ENCODE measurements at regions of chr1 and their contacts with region 1.

Region 1: GRCh38 chr1:15788624-15789301 is 18.7 kb downstream of the UQCRHL start:
- DNase-seq: peak; percentile 76
- H3K4me3 ChIP-seq: no peak overlapping the region
- H3K27ac ChIP-seq: peak overlapping the region; percentile 50
- H3K4me1 ChIP-seq: peaks cover 26% of the 10 kb centered on the region
- H3K27me3 ChIP-seq: no peaks in the 10 kb centered on the region
- CTCF ChIP-seq: no peak

Region 2: GRCh38 chr1:15851210-15852035 is 62.7 kb after region 1 on chr1:
- CTCF ChIA-PET with region 1: no interaction called
- dilution Hi-C with region 1: no loop called
- in situ Hi-C with region 1: no loop called
- intact Hi-C with region 1: no loop called
- DNase-seq: no peak
- H3K4me3 ChIP-seq: no peak overlapping the region
- H3K27ac ChIP-seq: peak overlapping the region; percentile 21
- H3K4me1 ChIP-seq: peaks cover 31% of the 10 kb centered on the region
- H3K27me3 ChIP-seq: no peaks in the 10 kb centered on the region
- CTCF ChIP-seq: no peak

Region 3: GRCh38 chr1:15994590-15995351 is 206.0 kb after region 1 on chr1:
- CTCF ChIA-PET with region 1: no interaction called
- dilution Hi-C with region 1: no loop called
- in situ Hi-C with region 1: no loop called
- intact Hi-C with region 1: loop called (anchors 1 kb)
- DNase-seq: peak; percentile 40
- H3K4me3 ChIP-seq: no peak overlapping the region
- H3K27ac ChIP-seq: no peak overlapping the region
- H3K4me1 ChIP-seq: no peaks in the 10 kb centered on the region
- H3K27me3 ChIP-seq: no peaks in the 10 kb centered on the region
- CTCF ChIP-seq: peak; percentile 68 to 84

Region 4: GRCh38 chr1:16055613-16056520 is 267.1 kb after region 1 on chr1:
- CTCF ChIA-PET with region 1: no interaction called
- dilution Hi-C with region 1: no loop called
- in situ Hi-C with region 1: no loop called
- intact Hi-C with region 1: loop called (anchors 1 kb)
- DNase-seq: peak; percentile 73
- H3K4me3 ChIP-seq: no peak overlapping the region
- H3K27ac ChIP-seq: no peak overlapping the region
- H3K4me1 ChIP-seq: no peaks in the 10 kb centered on the region
- H3K27me3 ChIP-seq: no peaks in the 10 kb centered on the region
- CTCF ChIP-seq: peak; percentile 88 to 98